CD14-positive monocyte (primary cell): ENCODE measurements at regions of chr2 and their contacts with region 1.

Region 1: DNA sequence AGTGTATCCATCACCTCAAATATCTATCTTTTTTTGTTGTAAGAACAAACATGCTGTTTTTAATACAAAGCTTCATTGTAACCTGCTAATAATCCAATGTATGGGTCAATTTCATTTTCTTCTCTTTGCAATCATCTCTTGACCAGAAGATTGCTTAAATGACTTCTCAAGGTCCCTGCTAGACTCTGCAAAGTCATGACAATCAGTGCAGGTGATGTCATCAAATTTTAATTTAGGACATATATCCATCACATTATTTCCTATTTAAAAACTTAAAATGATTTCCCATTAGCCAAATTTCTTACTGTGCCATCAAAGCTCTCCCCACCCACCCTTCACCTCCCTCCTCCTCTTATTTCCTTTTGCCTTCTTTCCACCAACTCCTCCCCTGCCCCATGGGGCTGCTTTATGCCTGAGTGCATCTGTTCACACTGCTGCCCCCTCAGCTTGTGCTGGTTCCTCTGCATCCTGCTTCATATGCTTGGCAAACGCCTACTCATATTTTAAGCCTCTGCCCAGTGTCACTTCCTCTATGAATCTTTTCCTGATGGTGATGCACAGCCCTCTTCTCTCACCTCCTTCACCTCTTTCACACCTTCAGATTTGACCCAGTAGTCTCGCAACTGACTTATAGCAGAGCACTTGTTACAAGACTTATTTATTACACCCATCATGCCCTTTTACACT is 20.3 kb downstream of the PLEK start:
- DNase-seq: peak in 2 of 3 donors; percentile 68 to 82
- H3K4me3 ChIP-seq: no peak overlapping the region
- H3K4me3 Mint-ChIP-seq: peak overlapping the region in 1 of 2 donors; percentile 8
- H3K27ac ChIP-seq: peak overlapping the region; percentile 75 to 96
- H3K27ac Mint-ChIP-seq: peak overlapping the region; percentile 94 to 100 (median 97)
- H3K4me1 ChIP-seq: peaks cover 81 to 89% of the 10 kb centered on the region in 2 donors
- H3K4me1 Mint-ChIP-seq: peaks cover 89% of the 10 kb centered on the region
- H3K27me3 ChIP-seq: no peaks in the 10 kb centered on the region
- H3K27me3 Mint-ChIP-seq: peaks cover 0 to 2% (median 0%) of the 10 kb centered on the region in 3 donors
- CTCF ChIP-seq: no peak

Region 2: DNA sequence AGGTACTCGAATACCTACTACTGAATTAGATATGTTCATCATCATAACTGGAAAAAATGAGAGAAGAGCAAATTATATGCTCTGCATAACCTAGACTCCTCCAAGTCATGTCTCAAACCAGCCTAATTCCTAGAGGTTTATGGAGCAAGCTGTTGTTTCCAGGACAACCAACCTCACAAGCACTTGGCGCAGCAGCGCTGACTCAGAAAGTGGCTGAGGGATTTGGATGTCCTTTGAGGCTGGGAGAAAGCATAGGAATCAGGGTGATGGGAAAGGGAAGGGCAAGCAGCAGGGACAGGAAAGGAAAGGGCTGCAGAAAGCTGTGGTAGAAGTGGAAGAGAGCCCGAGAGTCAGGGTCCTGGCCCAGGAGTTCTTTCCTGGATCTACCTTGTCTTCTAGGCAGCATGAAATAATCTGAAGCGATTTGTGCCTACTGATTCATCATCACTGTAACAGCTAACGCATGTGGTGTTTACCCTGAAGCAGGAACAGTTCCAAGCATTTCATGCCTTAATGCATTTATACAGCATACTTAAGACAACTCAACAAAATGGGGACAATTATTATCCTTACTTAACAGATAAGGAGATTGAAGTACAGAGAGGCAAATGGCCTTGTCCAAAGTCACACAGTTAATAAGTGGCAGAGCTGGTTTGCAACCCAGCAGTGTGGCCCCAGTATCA is 16.6 kb before region 1 on chr2:
- intact Hi-C with region 1: loop called (anchors 2 kb)
- DNase-seq: peak in 1 of 3 donors; percentile 46
- H3K4me3 ChIP-seq: peak overlapping the region; percentile 79 to 98 (median 93)
- H3K4me3 Mint-ChIP-seq: peak overlapping the region; percentile 94 to 97
- H3K27ac ChIP-seq: peak overlapping the region; percentile 66 to 96
- H3K27ac Mint-ChIP-seq: peak overlapping the region; percentile 90 to 99 (median 98)
- H3K4me1 ChIP-seq: peaks cover 68 to 77% of the 10 kb centered on the region in 2 donors
- H3K4me1 Mint-ChIP-seq: peaks cover 69% of the 10 kb centered on the region
- H3K27me3 ChIP-seq: no peaks in the 10 kb centered on the region
- H3K27me3 Mint-ChIP-seq: peaks cover 0 to 4% (median 0%) of the 10 kb centered on the region in 3 donors
- CTCF ChIP-seq: no peak

Region 3: GRCh38 chr2:68423966-68424650 is 38.7 kb after region 1 on chr2:
- intact Hi-C with region 1: loop called (anchors 5 kb)
- DNase-seq: peak; percentile 91 to 95 (median 94)
- H3K4me3 ChIP-seq: peak overlapping the region in 1 of 3 experiments; percentile 45
- H3K4me3 Mint-ChIP-seq: no peak overlapping the region
- H3K27ac ChIP-seq: peak overlapping the region; percentile 12 to 91
- H3K27ac Mint-ChIP-seq: no peak overlapping the region
- H3K4me1 ChIP-seq: peaks cover 75 to 79% of the 10 kb centered on the region in 2 donors
- H3K4me1 Mint-ChIP-seq: peaks cover 40% of the 10 kb centered on the region
- H3K27me3 ChIP-seq: no peaks in the 10 kb centered on the region
- H3K27me3 Mint-ChIP-seq: no peaks in the 10 kb centered on the region
- CTCF ChIP-seq: no peak

Region 4: DNA sequence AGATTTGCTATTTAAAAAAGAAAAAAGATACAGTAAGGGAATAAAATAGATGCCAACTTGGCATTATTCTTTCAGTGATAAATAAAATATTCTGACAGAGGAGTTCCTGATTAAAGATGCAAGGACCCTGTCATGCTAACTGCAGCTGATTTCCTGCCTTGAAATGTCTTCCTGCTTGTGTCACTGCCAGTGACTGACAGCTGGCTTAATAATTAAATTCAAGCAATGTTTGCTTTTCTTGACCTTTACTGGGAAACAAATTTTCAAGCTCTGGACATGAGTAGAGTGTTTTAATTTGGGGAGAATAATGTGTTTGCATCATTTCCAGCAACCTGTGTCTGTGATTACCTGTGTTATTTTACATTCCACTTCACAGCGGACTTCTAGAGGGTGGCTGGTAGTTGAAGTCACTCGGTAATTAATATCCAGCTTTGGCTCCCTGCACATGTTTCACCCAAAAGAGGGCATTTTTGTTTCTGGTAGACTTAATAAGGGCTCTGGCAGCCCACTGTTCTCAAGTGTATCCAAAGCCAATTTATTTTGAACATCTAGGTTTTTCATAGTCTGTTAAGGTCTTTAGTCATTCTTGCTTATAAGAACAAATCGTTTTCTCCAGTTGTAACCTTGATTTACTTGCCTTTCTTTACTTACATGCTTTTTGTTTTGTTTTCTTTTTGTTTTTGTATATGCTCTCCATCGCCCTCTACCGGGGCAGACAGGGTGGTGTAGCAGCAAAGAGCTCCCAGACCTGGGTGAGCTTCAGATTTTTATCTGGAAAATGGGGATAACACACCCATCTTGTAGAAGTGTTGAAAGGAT is 209.5 kb after region 1 on chr2:
- intact Hi-C with region 1: no loop called
- DNase-seq: peak; percentile 23 to 43 (median 30)
- H3K4me3 ChIP-seq: peak overlapping the region in 1 of 3 experiments; percentile 19
- H3K4me3 Mint-ChIP-seq: peak overlapping the region; percentile 2 to 46
- H3K27ac ChIP-seq: peak overlapping the region in 1 of 2 donors; percentile 14
- H3K27ac Mint-ChIP-seq: peak overlapping the region in 1 of 7 donors; percentile 40
- H3K4me1 ChIP-seq: peaks cover 11 to 15% of the 10 kb centered on the region in 2 donors
- H3K4me1 Mint-ChIP-seq: peaks cover 19% of the 10 kb centered on the region
- H3K27me3 ChIP-seq: no peaks in the 10 kb centered on the region
- H3K27me3 Mint-ChIP-seq: peaks cover 0 to 3% (median 3%) of the 10 kb centered on the region in 3 donors
- CTCF ChIP-seq: peak; percentile 96